Activated CD4-positive, alpha-beta T cell treated with anti-CD3 and anti-CD28 coated beads for 36 hours (primary cell): ENCODE measurements at regions of chr1 and their contacts with region 1.

Region 1: DNA sequence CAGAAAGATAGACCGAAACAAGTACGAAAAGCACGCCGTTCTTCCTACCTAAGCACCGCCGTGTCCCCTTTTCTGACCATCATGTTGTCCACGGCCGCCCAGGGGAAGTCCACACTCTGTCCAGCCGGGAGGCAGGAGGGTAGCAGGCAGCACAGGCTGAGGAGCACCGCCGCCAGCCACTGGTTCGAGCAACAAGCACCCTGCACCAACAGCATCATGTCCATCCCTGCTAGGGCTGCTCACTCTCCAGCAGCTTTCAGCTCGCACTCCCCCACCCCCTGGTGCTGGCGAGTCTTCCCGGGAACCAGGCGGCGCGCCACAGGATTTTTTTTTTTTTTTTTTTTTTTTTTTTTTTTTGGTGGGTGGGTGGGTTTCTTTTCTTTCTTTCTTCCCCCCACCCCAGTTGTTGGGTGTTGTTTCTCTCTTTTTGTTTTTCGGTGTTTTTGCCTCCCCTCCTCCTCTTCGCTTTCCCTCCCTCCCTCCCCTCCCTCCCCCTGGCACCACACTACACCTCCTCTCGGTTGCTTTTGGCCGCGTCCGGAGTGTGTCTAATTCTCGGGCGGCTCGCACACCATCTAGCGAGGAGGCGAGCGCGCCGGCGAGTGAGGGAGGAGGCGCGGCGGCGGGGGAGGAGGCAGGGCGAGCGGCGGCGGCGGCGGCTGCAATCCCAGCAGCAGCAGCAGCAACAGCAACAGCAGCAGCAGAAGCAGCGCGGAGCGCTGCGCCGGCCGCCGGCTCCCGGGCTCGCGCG is at the start of gene NEGR1:
- DNase-seq: peak; percentile 84
- ATAC-seq: peak; percentile 60
- H3K4me3 Mint-ChIP-seq: no peak within 1 kb of the TSS
- H3K27ac Mint-ChIP-seq: no peak within 1 kb of the TSS
- H3K4me1 Mint-ChIP-seq: peaks cover 16% of the 10 kb centered on the region
- H3K27me3 Mint-ChIP-seq: peaks cover 24% of the 10 kb centered on the region
- total RNA-seq, gene NEGR1: not detected

Region 2: GRCh38 chr1:71899881-71900280 is 382.6 kb before region 1 on chr1:
- CTCF ChIA-PET with region 1: no interaction called
- POLR2A ChIA-PET with region 1: no interaction called
- intact Hi-C with region 1: no loop called
- DNase-seq: no peak
- ATAC-seq: no peak
- H3K4me3 Mint-ChIP-seq: no peak overlapping the region
- H3K27ac Mint-ChIP-seq: no peak overlapping the region
- H3K4me1 Mint-ChIP-seq: no peaks in the 10 kb centered on the region
- H3K27me3 Mint-ChIP-seq: no peaks in the 10 kb centered on the region

Region 3: GRCh38 chr1:72184099-72184701 is 98.2 kb before region 1 on chr1:
- CTCF ChIA-PET with region 1: no interaction called
- POLR2A ChIA-PET with region 1: no interaction called
- intact Hi-C with region 1: loop called in 1 of 2 experiments (anchors 5 kb)
- DNase-seq: no peak
- ATAC-seq: no peak
- H3K4me3 Mint-ChIP-seq: no peak overlapping the region
- H3K27ac Mint-ChIP-seq: no peak overlapping the region
- H3K4me1 Mint-ChIP-seq: no peaks in the 10 kb centered on the region
- H3K27me3 Mint-ChIP-seq: no peaks in the 10 kb centered on the region

Region 4: DNA sequence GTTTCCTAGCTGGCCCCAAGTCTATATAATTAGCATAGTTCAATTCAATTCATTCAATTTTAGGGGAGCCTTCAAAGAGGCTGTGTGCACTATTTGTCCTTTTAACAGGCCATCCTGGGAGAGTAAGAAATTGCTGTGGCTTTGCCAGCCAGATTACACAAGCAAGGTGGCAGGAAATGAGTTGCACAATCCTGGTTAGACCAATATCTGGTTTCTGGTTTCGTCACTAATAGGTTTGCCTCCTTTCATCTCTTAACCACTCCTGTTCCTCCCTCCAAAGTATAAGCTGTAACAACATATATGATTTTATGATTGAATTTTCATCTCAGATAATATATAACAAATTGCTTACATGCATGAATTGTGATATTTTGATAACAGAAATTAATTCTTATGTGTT is 84.0 kb after region 1 on chr1:
- CTCF ChIA-PET with region 1: no interaction called
- POLR2A ChIA-PET with region 1: no interaction called
- intact Hi-C with region 1: loop called in 1 of 2 experiments (anchors 5 kb)
- DNase-seq: no peak
- ATAC-seq: no peak
- H3K4me3 Mint-ChIP-seq: no peak overlapping the region
- H3K27ac Mint-ChIP-seq: no peak overlapping the region
- H3K4me1 Mint-ChIP-seq: peaks cover 3% of the 10 kb centered on the region
- H3K27me3 Mint-ChIP-seq: no peaks in the 10 kb centered on the region

Region 5: GRCh38 chr1:74197657-74198552 is 1915.5 kb after region 1 on chr1 and contains the starts of genes FPGT and LRRIQ3:
- CTCF ChIA-PET with region 1: no interaction called
- POLR2A ChIA-PET with region 1: no interaction called
- intact Hi-C with region 1: loop called in 1 of 2 experiments (anchors 5 kb)
- DNase-seq: peak; percentile 97
- ATAC-seq: peak; percentile 96
- H3K4me3 Mint-ChIP-seq: peak within 1 kb of the TSS; percentile 85
- H3K27ac Mint-ChIP-seq: peak within 1 kb of the TSS; percentile 95
- H3K4me1 Mint-ChIP-seq: peaks cover 15% of the 10 kb centered on the region
- H3K27me3 Mint-ChIP-seq: no peaks in the 10 kb centered on the region
- total RNA-seq, gene FPGT: 12.5 to 13.9 TPM
- total RNA-seq, gene LRRIQ3: 1.9 to 2.7 TPM